ENCODE measurements at regions of chr17 and their contacts with region 1.

Region 1: DNA sequence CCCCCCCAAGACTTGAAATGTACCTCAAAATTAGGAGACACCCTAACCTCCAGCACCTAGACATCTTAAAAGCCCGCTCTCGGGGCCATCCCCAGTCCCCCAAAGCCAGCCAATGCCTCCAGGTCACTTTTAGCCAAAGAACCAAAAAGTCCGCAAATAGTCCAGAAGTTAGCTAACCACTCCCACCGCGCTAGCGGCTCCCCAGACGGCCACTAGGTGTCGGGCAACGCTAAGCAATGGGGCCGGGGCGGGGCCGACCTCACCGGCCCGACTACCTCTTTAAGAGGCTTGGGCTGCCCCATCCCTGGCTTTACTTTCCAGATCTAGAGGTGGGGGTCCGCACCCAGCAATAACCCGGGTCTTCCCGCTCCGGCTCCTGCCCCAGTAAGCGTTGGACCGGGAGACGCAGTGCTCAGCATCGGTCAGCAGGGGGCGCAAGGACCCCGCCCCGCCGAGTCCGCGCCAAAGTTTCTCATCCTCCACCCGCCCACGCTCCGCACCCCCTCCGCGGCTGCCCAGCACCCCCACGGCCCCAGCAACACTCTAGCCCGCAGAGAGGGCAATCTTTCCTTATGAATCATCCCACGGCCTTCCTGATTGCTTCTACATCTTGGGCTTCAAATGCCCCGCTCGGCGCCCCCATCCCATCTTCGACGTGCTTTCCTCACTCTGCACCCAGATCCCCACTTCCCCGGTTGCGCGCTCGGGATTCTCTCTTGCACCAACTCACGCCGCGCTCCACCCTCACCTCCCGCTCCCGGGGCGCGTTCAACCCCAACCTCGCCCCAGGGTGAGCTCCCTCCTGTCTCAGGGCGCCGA is 765 bp downstream of the COL1A1 start:
- DNase-seq: peak; percentile 76 to 92 (median 89)
- H3K4me3 ChIP-seq: peak overlapping the region; percentile 6 to 74 (median 56)
- H3K27ac ChIP-seq: no peak overlapping the region
- H3K4me1 ChIP-seq: peaks cover 0 to 19% (median 18%) of the 10 kb centered on the region in 4 experiments
- H3K27me3 ChIP-seq: peaks cover 0 to 33% (median 21%) of the 10 kb centered on the region in 5 experiments

Region 2: DNA sequence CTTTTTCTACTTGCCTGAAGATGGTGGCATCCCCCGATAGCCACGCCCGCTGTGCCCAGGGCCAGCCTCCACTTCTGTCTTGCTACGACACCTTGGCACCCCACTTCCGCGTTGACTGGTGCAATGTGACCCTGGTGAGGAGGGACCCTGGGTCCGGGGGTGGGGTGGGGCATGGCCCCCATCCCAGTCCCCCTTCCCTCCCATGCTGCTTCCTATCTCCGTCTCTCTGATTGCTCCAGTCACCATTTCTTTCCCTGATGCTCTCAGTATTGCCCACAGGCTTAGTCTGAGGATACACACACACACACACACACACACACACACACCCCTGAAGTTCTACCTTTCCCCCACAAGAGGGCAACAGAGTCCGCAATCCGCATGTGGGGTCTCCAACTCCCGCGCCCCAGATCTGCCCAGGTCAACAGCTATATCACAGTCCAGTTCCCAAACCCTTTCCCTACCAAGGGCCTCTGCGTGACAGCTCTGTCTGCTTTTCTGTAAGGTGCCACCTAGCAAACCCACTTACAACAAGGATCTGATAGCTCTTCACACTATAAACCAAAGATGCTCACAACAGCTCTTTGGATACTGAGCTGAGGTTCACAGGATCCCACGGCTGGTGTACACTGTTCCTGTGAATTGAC is 31.4 kb before region 1 on chr17:
- CTCF ChIA-PET with region 1: interaction called, 87 read pairs
- POLR2A ChIA-PET with region 1: interaction called, 3 read pairs
- DNase-seq: peak; percentile 86 to 93 (median 92)
- H3K4me3 ChIP-seq: peak overlapping the region in 2 of 7 experiments; percentile 15 to 64
- H3K27ac ChIP-seq: no peak overlapping the region
- H3K4me1 ChIP-seq: peaks cover 0 to 9% (median 5%) of the 10 kb centered on the region in 4 experiments
- H3K27me3 ChIP-seq: no peaks in the 10 kb centered on the region

Region 3: DNA sequence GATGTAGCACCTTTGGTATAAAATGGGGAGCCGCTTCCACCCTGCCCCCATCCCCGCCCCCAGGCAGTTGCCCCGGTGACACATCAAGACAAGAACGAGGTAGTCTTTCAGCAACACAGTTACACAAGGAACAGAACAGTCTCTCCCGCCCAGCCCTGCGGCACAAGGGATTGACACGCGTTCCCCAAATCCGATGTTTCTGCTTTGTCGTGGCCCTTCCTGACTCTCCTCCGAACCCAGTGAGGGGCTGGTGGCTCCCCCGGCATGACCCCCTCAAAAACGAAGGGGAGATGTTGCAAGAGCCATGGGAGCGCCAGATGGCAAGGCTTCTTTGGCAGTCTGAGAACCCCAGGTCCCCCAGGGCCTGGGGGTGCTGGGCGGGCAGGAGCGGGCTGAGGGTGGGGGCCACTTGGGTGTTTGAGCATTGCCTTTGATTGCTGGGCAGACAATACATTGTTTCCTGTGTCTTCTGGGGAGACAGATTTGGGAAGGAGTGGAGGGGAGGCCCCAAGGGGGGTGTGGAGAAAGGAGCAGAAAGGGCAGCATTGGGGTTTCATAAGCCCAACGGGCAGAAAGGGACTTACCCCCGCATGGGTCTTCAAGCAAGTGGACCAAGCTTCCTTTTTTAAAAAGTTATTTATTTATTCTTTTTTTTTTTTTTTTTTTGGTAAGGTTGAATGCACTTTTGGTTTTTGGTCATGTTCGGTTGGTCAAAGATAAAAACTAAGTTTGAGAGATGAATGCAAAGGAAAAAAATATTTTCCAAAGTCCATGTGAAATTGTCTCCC is 15.9 kb before region 1 on chr17:
- CTCF ChIA-PET with region 1: interaction called, 27 read pairs
- POLR2A ChIA-PET with region 1: no interaction called
- DNase-seq: no peak
- H3K4me3 ChIP-seq: no peak overlapping the region
- H3K27ac ChIP-seq: no peak overlapping the region
- H3K4me1 ChIP-seq: peaks cover 0 to 20% (median 18%) of the 10 kb centered on the region in 4 experiments
- H3K27me3 ChIP-seq: no peaks in the 10 kb centered on the region

Region 4: DNA sequence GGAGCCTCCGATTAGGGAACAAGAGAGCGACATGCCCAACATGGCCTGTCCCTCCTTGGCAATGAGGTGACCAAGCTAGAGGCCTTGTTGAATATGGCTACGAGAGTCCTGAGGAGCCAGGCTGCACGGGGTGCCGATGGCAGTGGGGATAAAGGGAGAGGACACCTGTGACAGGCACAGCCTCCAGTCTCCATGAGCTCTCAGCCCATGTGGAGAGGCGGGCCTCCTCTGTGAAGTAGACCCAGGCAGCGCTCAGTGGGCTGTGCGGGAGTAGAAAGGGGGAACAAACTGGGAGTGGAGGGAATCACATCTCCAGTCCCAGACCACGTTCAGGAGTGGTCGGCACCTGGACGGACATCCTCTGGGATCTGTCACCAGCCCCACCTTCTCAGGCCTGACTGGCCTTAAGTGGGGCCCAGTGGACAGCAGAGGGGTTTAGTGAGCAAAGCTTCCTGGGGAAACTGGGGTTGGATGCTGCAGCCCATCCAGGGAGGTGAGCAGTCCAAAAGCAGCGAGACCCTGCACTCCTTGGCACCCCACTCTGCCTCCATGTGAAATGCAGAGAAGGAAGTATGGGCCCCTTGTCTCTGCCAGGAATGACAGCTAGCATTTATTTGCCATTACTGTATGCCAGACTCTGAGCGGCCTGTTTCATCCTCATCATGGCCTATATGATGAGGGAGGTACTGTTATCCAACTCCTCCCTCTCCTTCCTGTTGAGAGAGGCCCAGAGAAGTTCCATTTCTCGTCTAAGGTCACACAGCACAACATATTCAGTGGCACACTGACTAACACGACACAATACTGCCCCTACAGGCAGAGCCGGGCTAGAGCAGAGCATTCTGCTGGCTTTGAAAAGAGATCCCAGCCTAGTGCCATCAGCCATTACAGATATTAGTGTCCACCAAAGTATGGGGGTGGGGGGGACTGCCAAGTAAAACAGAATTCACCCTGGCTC is 69.1 kb after region 1 on chr17:
- CTCF ChIA-PET with region 1: interaction called, 184 read pairs
- POLR2A ChIA-PET with region 1: interaction called, 3 read pairs
- DNase-seq: peak; percentile 53 to 74 (median 58)
- H3K4me3 ChIP-seq: no peak overlapping the region
- H3K27ac ChIP-seq: no peak overlapping the region
- H3K4me1 ChIP-seq: peaks cover 0 to 67% (median 53%) of the 10 kb centered on the region in 4 experiments
- H3K27me3 ChIP-seq: peaks cover 0 to 6% (median 0%) of the 10 kb centered on the region in 5 experiments

Region 5: DNA sequence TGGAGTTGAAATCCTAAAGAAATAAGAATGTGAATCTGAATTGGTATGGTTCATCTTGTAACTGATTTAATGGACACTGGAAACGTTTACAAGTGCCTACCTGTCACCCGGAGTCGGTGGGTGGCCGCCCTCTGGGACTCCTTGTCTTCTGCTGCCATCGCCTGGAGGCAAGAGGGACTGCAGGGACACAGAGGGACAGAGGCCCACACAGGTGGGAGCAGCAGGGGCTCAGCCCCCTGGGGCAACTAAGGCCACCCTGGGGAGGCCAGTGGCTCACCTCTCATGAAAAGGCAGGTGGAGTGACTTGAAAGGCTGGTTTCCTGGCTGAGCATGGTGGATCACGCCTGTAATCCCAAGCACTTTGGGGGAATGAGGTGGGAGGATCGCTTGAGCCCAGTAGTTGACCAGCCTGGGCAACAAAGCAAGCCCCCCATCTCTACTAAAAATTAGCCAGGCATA is 96.8 kb after region 1 on chr17:
- CTCF ChIA-PET with region 1: interaction called, 276 read pairs
- POLR2A ChIA-PET with region 1: interaction called, 3 read pairs
- DNase-seq: peak; percentile 67 to 81 (median 77)
- H3K4me3 ChIP-seq: no peak overlapping the region
- H3K27ac ChIP-seq: no peak overlapping the region
- H3K4me1 ChIP-seq: peaks cover 0 to 10% (median under 1%) of the 10 kb centered on the region in 4 experiments
- H3K27me3 ChIP-seq: no peaks in the 10 kb centered on the region